Naive thymus-derived CD8-positive, alpha-beta T cell (primary cell): ENCODE measurements at regions of chr14 and their contacts with region 1.

Region 1: GRCh38 chr14:100645192-100645990 is 58.2 kb upstream of the BEGAIN start:
- DNase-seq: peak; percentile 74 to 92 (median 82)
- ATAC-seq: peak; percentile 93 to 96
- H3K4me3 Mint-ChIP-seq: peak overlapping the region in 8 of 10 donors; percentile 16 to 70 (median 38)
- H3K27ac Mint-ChIP-seq: peak overlapping the region in 9 of 10 donors; percentile 36 to 83 (median 62)
- H3K4me1 Mint-ChIP-seq: peaks cover 25 to 57% (median 52%) of the 10 kb centered on the region in 4 donors
- H3K27me3 Mint-ChIP-seq: peaks cover 0 to 1% (median 0%) of the 10 kb centered on the region in 5 donors

Region 2: GRCh38 chr14:100383727-100384158 is 261.6 kb before region 1 on chr14:
- POLR2A ChIA-PET with region 1: interaction called, 12 read pairs
- DNase-seq: peak; percentile 39 to 79 (median 58)
- ATAC-seq: peak; percentile 73 to 90
- H3K4me3 Mint-ChIP-seq: no peak overlapping the region
- H3K27ac Mint-ChIP-seq: peak overlapping the region in 1 of 10 donors; percentile 53
- H3K4me1 Mint-ChIP-seq: peaks cover 13 to 35% (median 18%) of the 10 kb centered on the region in 4 donors
- H3K27me3 Mint-ChIP-seq: no peaks in the 10 kb centered on the region

Region 3: GRCh38 chr14:100547633-100548294 is 97.6 kb before region 1 on chr14:
- POLR2A ChIA-PET with region 1: interaction called, 10 read pairs
- DNase-seq: peak; percentile 19 to 89 (median 52)
- ATAC-seq: peak; percentile 63 to 73
- H3K4me3 Mint-ChIP-seq: peak overlapping the region; percentile 66 to 89 (median 85)
- H3K27ac Mint-ChIP-seq: peak overlapping the region; percentile 36 to 97 (median 93)
- H3K4me1 Mint-ChIP-seq: peaks cover 10 to 33% (median 31%) of the 10 kb centered on the region in 4 donors
- H3K27me3 Mint-ChIP-seq: no peaks in the 10 kb centered on the region